ENCODE measurements at regions of chr1 and their contacts with region 1.

Region 1: DNA sequence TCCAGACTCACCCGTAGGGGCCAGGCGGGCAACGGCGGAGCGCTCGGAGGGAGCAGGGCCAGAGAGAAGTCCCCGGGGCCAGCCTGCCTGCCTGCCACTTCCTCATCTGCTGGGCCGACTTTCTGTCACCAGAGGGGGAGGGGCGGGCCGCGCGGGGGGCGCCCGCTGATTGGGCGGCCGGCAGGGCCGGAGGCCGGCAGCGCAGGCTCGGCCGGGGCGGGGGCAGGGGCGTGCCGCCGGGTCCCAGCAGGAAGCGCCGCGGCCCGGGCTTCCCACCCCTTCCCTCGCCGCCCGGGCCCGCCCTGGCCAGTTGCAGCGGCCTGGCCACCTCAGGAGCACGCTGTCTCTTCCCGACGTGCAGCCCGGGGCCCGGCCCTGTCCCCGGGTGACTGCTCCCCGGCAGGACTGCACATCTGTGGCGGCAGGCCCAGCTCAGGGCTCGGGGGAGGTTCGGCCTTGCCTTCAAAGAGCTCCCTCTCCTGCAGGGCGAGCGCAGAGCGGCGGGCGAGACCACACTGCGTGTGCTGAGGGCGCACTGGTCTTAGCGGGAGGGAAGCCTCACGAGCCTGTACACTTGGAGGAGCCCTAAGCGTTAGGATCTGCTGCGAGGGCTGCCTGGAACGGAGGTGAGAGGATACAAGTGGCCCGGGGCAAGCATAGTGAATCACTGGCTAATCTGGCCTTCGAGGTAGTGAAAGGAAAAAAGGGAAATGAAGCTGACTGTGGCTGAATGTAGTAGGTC is at the start of gene ELOVL1:
- DNase-seq: peak; percentile 46 to 87 (median 72)
- ATAC-seq: peak; percentile 74 to 77
- H3K4me3 Mint-ChIP-seq: peak within 1 kb of the TSS; percentile 86 to 99 (median 92)
- H3K27ac Mint-ChIP-seq: peak within 1 kb of the TSS; percentile 89 to 98 (median 95)
- H3K4me1 Mint-ChIP-seq: peaks cover 29 to 47% (median 43%) of the 10 kb centered on the region in 4 donors
- H3K27me3 Mint-ChIP-seq: no peaks in the 10 kb centered on the region
- polyA plus RNA-seq, gene ELOVL1: 39.8 to 49.4 (median 45.4) TPM

Region 2: GRCh38 chr1:43383449-43383848 is 15.4 kb after region 1 on chr1:
- POLR2A ChIA-PET with region 1: interaction called, 20 read pairs
- DNase-seq: no peak
- ATAC-seq: no peak
- H3K4me3 Mint-ChIP-seq: no peak overlapping the region
- H3K27ac Mint-ChIP-seq: peak overlapping the region in 3 of 10 donors; percentile 4 to 45 (median 41)
- H3K4me1 Mint-ChIP-seq: peaks cover 24 to 42% (median 34%) of the 10 kb centered on the region in 4 donors
- H3K27me3 Mint-ChIP-seq: no peaks in the 10 kb centered on the region

Region 3: GRCh38 chr1:43389326-43390313 is 21.5 kb after region 1 on chr1 and contains the starts of genes MED8 and SZT2:
- POLR2A ChIA-PET with region 1: interaction called, 20 read pairs
- DNase-seq: peak; percentile 82 to 95 (median 88)
- ATAC-seq: peak; percentile 91 to 95
- H3K4me3 Mint-ChIP-seq: peak within 1 kb of the TSS; percentile 98 to 100 (median 100)
- H3K27ac Mint-ChIP-seq: peak within 1 kb of the TSS; percentile 98 to 100 (median 99)
- H3K4me1 Mint-ChIP-seq: peaks cover 32 to 66% (median 50%) of the 10 kb centered on the region in 4 donors
- H3K27me3 Mint-ChIP-seq: no peaks in the 10 kb centered on the region
- polyA plus RNA-seq, gene MED8: 16.8 to 34.7 (median 30.6) TPM
- polyA plus RNA-seq, gene SZT2: 2.1 to 7.9 (median 4.9) TPM

Measured in naive thymus-derived CD8-positive, alpha-beta T cell (primary cell).